Heart right ventricle (tissue), 16 donors: ENCODE measurements at regions of chr5 and their contacts with region 1.

Region 1: GRCh38 chr5:151659001-151659754 is 27.5 kb downstream of the SPARC start:
- DNase-seq: peak; percentile 88
- ATAC-seq: peak; percentile 76 to 91 (median 82)
- H3K4me3 ChIP-seq: no peak overlapping the region
- H3K27ac ChIP-seq: peak overlapping the region in 8 of 10 donors; percentile 3 to 84 (median 32)
- H3K4me1 ChIP-seq: peaks cover 8 to 41% (median 22%) of the 10 kb centered on the region in 9 donors
- H3K27me3 ChIP-seq: no peaks in the 10 kb centered on the region
- CTCF ChIP-seq: peak; percentile 88 to 97 (median 91)

Region 2: DNA sequence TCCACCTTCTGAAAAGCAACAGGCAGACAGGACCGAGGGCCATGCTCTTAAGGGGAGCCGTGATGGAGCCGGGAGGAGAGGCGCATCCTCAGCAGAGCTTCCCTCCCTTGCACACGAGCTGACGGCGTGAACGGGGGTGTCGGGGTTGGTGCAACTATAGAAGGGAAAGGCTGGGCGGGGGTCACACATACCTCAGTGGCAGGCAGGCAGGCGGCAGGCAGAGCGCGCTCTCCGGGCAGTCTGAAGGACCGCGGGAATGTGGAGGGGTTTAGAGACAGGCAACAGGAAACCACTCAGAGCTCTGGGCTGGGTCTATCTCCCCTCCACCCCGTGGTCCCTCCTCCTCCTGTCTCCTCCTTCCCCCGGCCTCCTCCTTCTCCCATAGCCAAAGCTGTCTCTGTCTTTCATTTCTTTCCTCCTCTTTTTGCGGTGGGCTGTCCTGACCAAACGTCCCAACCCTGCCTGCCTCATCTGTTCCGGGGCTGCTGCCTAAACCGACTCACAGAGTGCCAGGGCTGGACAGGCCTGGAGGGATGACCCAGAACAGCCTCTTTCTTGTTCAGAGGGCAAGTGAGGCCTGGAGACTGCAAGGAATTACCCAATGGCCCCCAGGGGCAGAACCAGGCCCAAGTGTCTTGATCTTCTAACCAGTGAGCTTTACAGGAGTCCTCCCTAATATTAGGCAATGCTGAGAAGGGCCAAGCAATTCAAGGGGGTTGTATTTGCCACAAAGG is 27.7 kb after region 1 on chr5 and contains the start of gene SPARC:
- intact Hi-C with region 1: loop called in 2 of 10 experiments (anchors 2 kb)
- DNase-seq: peak; percentile 75 to 87
- ATAC-seq: peak; percentile 89 to 94 (median 92)
- H3K4me3 ChIP-seq: peak within 1 kb of the TSS; percentile 57 to 78 (median 70)
- H3K27ac ChIP-seq: peak within 1 kb of the TSS; percentile 84 to 95 (median 91)
- H3K4me1 ChIP-seq: peaks cover 3 to 51% (median 41%) of the 10 kb centered on the region in 9 donors
- H3K27me3 ChIP-seq: peaks cover 0 to 10% (median 0%) of the 10 kb centered on the region in 7 donors
- CTCF ChIP-seq: no peak
- total RNA-seq, gene SPARC: 261 to 1,135 (median 456) TPM

Region 3: GRCh38 chr5:151719228-151720000 is 60.2 kb after region 1 on chr5:
- intact Hi-C with region 1: loop called in 7 of 10 experiments (anchors 1 to 5 kb)
- DNase-seq: peak; percentile 25 to 57
- ATAC-seq: peak in 7 of 8 donors; percentile 50 to 73 (median 62)
- H3K4me3 ChIP-seq: no peak overlapping the region
- H3K27ac ChIP-seq: peak overlapping the region in 7 of 10 donors; percentile 5 to 79 (median 59)
- H3K4me1 ChIP-seq: peaks cover 0 to 51% (median 6%) of the 10 kb centered on the region in 9 donors
- H3K27me3 ChIP-seq: no peaks in the 10 kb centered on the region
- CTCF ChIP-seq: peak; percentile 35 to 68 (median 63)

Region 4: DNA sequence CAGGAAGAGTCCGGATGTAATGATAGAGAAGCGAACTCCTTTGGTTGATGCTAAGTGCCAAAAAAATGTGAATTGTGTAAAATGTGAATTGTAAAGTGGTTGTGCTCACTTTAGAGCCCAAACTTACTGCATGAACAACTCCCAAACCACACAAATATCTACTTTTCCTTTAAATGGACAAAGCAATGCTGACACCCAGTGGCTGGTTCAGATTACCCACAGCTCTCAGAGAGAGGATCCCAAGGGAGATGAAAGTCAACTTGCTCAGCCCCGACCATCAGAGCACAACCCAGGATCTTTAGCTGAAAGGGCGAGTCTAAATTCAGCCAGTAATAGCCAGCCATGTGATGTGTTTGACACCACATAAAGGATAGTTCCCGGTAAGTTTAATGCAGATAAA is 612.2 kb after region 1 on chr5:
- intact Hi-C with region 1: loop called in 2 of 10 experiments (anchors 5 to 10 kb)
- DNase-seq: peak in 1 of 2 donors; percentile 46
- ATAC-seq: peak; percentile 50 to 79 (median 74)
- H3K4me3 ChIP-seq: no peak overlapping the region
- H3K27ac ChIP-seq: peak overlapping the region in 1 of 10 donors; percentile 52
- H3K4me1 ChIP-seq: peaks cover 8 to 50% (median 30%) of the 10 kb centered on the region in 9 donors
- H3K27me3 ChIP-seq: no peaks in the 10 kb centered on the region
- CTCF ChIP-seq: peak; percentile 16 to 69 (median 54)

Region 5: DNA sequence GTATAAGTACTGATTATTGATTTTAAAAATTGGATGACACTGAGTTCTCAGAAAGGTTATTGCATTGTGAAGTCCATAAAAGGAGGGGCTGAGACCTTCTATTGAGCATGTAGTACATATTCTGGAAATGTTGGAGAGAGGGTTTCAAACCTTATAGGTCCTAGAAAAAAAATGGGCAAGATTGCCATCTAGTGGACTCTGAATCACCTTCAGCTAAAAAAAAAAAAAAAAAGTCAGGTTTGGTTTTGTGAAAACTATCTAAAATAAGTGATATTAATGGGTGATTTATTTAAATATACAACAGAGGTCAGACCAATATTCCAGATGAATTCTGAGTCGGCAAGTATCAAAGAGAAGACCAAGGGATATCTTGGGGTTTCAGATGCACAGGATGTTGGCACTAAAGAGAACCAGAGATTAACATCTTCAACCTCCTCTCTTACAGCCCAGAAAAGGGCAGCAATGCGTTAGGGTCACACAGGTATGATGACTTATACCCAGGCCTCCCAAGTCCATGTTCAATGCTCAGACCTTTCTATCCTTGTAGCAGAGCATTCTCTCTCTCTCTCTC is 855.7 kb after region 1 on chr5:
- intact Hi-C with region 1: loop called in 2 of 10 experiments (anchors 10 kb)
- DNase-seq: no peak
- ATAC-seq: peak in 1 of 8 donors; percentile 31
- H3K4me3 ChIP-seq: no peak overlapping the region
- H3K27ac ChIP-seq: no peak overlapping the region
- H3K4me1 ChIP-seq: peaks cover 0 to 15% (median 0%) of the 10 kb centered on the region in 9 donors
- H3K27me3 ChIP-seq: peaks cover 0 to 3% (median 0%) of the 10 kb centered on the region in 7 donors
- CTCF ChIP-seq: peak in 7 of 9 donors; percentile 27 to 59 (median 42)